Ovary (tissue), 10 donors: ENCODE measurements at regions of chr4 and their contacts with region 1.

Region 1: DNA sequence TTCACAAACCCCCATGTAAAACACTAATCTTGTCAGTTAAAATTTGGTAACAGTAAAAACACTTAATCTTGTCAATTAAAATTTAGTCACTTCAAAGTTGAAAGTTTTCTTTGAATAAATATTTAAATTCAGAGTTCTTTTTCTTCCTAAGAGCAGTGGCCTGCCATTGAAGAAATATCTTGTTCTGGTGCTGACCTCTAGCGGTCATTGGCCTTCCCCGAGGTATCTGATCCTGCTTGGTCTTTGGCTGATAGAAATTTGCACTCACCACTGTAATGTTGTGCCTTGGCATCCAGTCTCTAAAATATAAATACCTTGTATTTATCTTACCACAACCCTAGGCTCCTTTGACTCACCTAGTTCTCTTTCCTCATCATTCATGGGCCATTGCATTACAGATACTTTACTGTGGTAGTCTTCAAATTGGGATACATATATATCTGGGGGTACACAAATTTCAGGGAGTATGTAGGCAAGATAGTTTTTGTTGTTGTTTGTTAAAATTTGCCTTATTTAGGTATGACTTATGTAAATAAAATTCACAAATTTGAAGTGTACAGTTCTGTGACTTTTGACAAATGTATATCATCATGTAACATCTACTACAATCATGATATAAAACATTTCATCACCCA is 6.7 kb upstream of the ART3 start:
- DNase-seq: peak; percentile 23 to 59 (median 51)
- H3K4me3 ChIP-seq: no peak overlapping the region
- H3K27ac ChIP-seq: no peak overlapping the region
- H3K4me1 ChIP-seq: no peaks in the 10 kb centered on the region
- H3K27me3 ChIP-seq: no peaks in the 10 kb centered on the region
- CTCF ChIP-seq: peak in 1 of 3 donors; percentile 17
- EP300 ChIP-seq: no peak
- POLR2A ChIP-seq: no peak

Region 2: GRCh38 chr4:75989846-75990528 is 77.8 kb before region 1 on chr4:
- intact Hi-C with region 1: loop called in 2 of 4 experiments (anchors 5 to 10 kb)
- DNase-seq: no peak
- H3K4me3 ChIP-seq: peak overlapping the region; percentile 72
- H3K27ac ChIP-seq: no peak overlapping the region
- H3K4me1 ChIP-seq: peaks cover 5% of the 10 kb centered on the region
- H3K27me3 ChIP-seq: no peaks in the 10 kb centered on the region
- CTCF ChIP-seq: no peak
- EP300 ChIP-seq: no peak
- POLR2A ChIP-seq: no peak

Region 3: DNA sequence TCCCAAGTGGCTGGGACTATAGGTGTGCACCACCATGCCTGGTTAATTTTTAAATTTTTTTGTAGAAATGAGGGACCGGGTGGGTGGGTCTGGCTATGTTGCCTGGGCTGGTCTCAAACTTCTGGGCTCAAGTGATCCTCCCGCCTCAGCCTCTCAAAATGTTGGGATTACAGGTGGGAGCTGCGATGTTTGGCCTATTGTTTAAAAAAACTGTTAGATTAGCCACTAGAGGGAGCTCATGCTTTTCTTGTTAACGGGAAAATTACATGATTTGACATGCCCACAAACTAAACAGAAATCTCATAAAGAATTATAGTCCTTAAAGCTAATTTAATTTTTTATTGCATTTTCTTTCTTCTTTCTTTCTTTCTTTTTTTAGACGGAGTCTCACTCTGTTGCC is 72.0 kb before region 1 on chr4:
- intact Hi-C with region 1: loop called in 2 of 4 experiments (anchors 5 to 10 kb)
- DNase-seq: no peak
- H3K4me3 ChIP-seq: no peak overlapping the region
- H3K27ac ChIP-seq: no peak overlapping the region
- H3K4me1 ChIP-seq: peaks cover 2% of the 10 kb centered on the region
- H3K27me3 ChIP-seq: no peaks in the 10 kb centered on the region
- CTCF ChIP-seq: peak in 2 of 3 donors; percentile 27 to 66
- EP300 ChIP-seq: no peak
- POLR2A ChIP-seq: no peak

Region 4: DNA sequence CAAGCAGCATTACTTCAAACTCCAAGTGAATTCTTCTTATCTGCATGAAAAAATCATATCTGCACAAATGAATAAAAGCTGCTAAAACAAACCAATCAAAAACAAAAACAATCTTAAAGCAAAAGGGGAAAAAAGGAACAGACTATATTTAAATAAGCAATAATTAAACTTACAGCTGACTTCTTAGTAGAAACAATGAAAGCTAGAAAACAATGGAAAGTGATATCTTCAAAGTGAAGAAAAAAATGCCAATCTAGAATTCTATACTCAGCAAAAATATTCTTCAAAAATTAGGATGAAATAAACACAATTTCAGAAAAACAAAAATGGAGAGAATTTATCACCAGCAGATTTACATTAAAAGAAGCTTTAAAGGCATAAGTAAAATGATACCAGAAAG is 258.7 kb after region 1 on chr4:
- intact Hi-C with region 1: no loop called
- DNase-seq: no peak
- H3K4me3 ChIP-seq: no peak overlapping the region
- H3K27ac ChIP-seq: no peak overlapping the region
- H3K4me1 ChIP-seq: no peaks in the 10 kb centered on the region
- H3K27me3 ChIP-seq: no peaks in the 10 kb centered on the region
- CTCF ChIP-seq: no peak
- EP300 ChIP-seq: no peak
- POLR2A ChIP-seq: no peak